Activated CD4-positive, alpha-beta T cell treated with anti-CD3 and anti-CD28 coated beads, Interleukin-2, amount 10 ng/mL, durations not matched to agents 24 days and 14 days (primary cell): ENCODE measurements at regions of chr16 and their contacts with region 1.

Region 1: GRCh38 chr16:87387942-87388817 is 4.0 kb upstream of the MAP1LC3B start:
- DNase-seq: peak; percentile 96
- H3K4me3 Mint-ChIP-seq: peak overlapping the region; percentile 44
- H3K27ac Mint-ChIP-seq: peak overlapping the region; percentile 96
- H3K4me1 Mint-ChIP-seq: peaks cover 40% of the 10 kb centered on the region
- H3K27me3 Mint-ChIP-seq: peaks cover 2% of the 10 kb centered on the region

Region 2: DNA sequence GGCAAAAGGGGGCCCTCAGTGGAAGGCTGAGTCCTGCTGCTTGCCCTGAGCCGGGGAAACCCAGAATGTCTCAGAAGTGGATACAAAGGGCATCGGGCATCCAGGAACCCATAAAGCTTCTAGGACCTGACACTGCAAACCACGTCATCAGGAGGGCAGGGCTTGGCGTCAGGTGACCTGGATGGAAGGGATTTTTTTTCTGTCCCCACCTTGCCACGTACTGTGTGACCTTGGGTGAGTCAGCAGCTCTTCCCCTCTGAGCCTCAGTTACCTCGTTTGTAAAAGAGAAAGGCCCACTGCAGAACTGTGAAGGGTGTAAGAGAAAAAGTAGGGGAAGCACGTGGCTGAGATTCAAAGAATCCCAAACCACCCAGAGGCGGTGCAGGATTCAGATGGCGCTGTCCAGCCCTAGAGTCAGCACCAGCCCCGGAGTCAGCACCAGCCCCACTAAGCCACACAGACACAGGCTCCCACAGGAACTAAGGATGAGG is 124.7 kb before region 1 on chr16:
- intact Hi-C with region 1: no loop called
- DNase-seq: no peak
- H3K4me3 Mint-ChIP-seq: no peak overlapping the region
- H3K27ac Mint-ChIP-seq: no peak overlapping the region
- H3K4me1 Mint-ChIP-seq: no peaks in the 10 kb centered on the region
- H3K27me3 Mint-ChIP-seq: no peaks in the 10 kb centered on the region

Region 3: GRCh38 chr16:87492721-87493607 is 104.8 kb after region 1 on chr16 and contains the start of gene ZCCHC14:
- intact Hi-C with region 1: loop called (anchors 1 kb)
- DNase-seq: peak; percentile 100
- H3K4me3 Mint-ChIP-seq: peak within 1 kb of the TSS; percentile 82
- H3K27ac Mint-ChIP-seq: peak within 1 kb of the TSS; percentile 64
- H3K4me1 Mint-ChIP-seq: peaks cover 34% of the 10 kb centered on the region
- H3K27me3 Mint-ChIP-seq: peaks cover 40% of the 10 kb centered on the region
- total RNA-seq, gene ZCCHC14: 11.6 and 12.0 TPM in 2 replicates

Region 4: GRCh38 chr16:87636072-87636684 is 248.0 kb after region 1 on chr16:
- intact Hi-C with region 1: loop called (anchors 5 kb)
- DNase-seq: peak; percentile 92
- H3K4me3 Mint-ChIP-seq: peak overlapping the region; percentile 73
- H3K27ac Mint-ChIP-seq: no peak overlapping the region
- H3K4me1 Mint-ChIP-seq: peaks cover 7% of the 10 kb centered on the region
- H3K27me3 Mint-ChIP-seq: peaks cover 6% of the 10 kb centered on the region

Region 5: DNA sequence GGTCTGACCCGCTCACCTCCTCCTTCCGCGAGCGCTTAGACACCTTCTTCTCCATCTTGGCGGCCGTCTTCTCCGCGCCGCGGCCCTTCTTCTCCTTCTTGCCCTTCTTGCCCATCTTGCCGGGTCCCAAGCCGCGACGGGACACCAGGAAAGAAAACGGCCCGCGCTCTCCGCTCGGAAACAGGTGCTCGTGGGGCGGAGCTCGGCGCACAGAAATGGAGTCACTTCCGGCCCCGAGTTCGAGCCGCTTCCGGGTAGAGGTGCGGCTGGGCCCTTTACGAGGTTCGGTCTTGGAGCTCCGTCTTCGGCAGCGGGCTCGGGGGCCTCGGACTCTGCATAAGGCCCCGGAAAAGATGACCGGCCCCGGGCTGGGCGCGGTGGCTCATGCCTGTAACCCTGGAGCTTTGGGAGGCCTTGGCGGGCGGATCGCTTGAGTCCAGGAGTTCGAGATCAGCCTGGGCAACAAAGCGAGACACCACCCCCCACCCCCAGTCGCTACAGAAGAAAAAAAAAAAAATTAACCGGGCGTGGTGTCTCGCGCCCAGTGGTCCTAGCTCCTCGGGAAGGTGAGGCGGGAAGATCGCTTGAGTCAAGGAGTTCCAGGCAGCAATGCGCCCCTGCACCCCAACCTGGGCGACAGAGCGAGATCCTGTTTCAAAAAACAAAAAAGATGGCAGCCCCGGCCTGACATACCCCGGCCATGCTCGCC is 377.8 kb after region 1 on chr16 and contains the start of gene KLHDC4:
- intact Hi-C with region 1: loop called (anchors 2 kb)
- DNase-seq: peak; percentile 97
- H3K4me3 Mint-ChIP-seq: peak within 1 kb of the TSS; percentile 98
- H3K27ac Mint-ChIP-seq: peak within 1 kb of the TSS; percentile 96
- H3K4me1 Mint-ChIP-seq: peaks cover 32% of the 10 kb centered on the region
- H3K27me3 Mint-ChIP-seq: no peaks in the 10 kb centered on the region
- total RNA-seq, gene KLHDC4: 76.1 and 91.0 TPM in 2 replicates

Region 6: GRCh38 chr16:87877938-87878507 is 489.8 kb after region 1 on chr16:
- intact Hi-C with region 1: loop called (anchors 10 kb)
- DNase-seq: peak; percentile 80
- H3K4me3 Mint-ChIP-seq: peak overlapping the region; percentile 32
- H3K27ac Mint-ChIP-seq: peak overlapping the region; percentile 73
- H3K4me1 Mint-ChIP-seq: peaks cover 46% of the 10 kb centered on the region
- H3K27me3 Mint-ChIP-seq: no peaks in the 10 kb centered on the region